ENCODE measurements at regions of chr14 and their contacts with region 1.

Region 1: DNA sequence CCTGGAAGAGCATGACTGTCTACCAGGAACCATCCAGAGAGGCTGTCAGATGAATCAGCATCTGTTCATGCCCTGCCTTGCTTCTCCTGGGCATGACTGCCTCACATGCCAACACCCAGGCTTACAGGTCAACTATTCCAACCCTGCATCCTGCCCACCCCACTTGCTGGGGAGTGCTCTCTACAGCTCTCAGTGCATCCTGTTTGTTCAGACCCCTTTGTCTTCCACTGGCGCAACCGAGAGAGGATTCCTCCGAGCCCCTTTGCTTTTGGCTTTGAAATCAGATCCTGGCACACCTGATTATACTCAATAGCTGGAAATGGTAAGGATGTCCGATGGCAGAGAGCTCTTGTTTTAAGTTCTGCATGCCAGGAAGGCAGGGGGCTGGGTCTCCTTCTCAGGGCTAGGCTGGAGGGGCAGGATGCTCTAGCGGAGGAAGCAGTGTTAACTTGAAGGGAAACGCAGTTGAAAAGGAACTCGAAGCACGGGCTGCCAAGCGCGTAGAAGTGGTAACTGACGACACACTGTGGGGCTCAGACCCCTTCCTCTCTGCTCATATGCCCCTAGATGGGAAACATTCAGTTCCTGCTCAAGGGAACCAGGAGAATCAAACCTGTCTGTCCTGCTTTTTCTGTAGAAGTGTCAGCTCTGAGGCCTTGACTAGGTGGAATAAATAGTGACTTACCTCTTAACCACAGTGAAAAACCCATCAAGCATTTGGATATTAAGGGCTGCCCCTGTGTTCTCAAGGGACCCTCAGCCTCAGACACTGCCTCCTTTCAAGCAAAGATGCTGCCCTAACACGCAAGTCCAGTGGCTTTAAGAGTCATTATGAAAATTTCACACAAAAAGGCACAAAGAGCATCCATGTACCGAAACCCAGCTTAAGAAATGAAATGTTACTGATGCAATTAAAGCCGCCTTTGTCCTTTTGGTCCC is 297.5 kb downstream of the ZFP36L1 start:
- DNase-seq: no peak
- ATAC-seq: peak; percentile 92
- H3K4me3 Mint-ChIP-seq: peak overlapping the region; percentile 64
- H3K27ac Mint-ChIP-seq: peak overlapping the region; percentile 98
- H3K4me1 Mint-ChIP-seq: peaks cover 84% of the 10 kb centered on the region
- H3K27me3 Mint-ChIP-seq: no peaks in the 10 kb centered on the region
- CTCF ChIP-seq: no peak

Region 2: GRCh38 chr14:68471029-68471963 is 24.1 kb before region 1 on chr14:
- CTCF ChIA-PET with region 1: interaction called, 3 read pairs
- POLR2A ChIA-PET with region 1: interaction called, 92 read pairs
- intact Hi-C with region 1: loop called (anchors 1 kb)
- DNase-seq: peak; percentile 22
- ATAC-seq: peak; percentile 69
- H3K4me3 Mint-ChIP-seq: peak overlapping the region; percentile 38
- H3K27ac Mint-ChIP-seq: peak overlapping the region; percentile 96
- H3K4me1 Mint-ChIP-seq: peaks cover 85% of the 10 kb centered on the region
- H3K27me3 Mint-ChIP-seq: no peaks in the 10 kb centered on the region
- CTCF ChIP-seq: no peak

Region 3: GRCh38 chr14:68476212-68476907 is 19.0 kb before region 1 on chr14:
- CTCF ChIA-PET with region 1: interaction called, 3 read pairs
- POLR2A ChIA-PET with region 1: interaction called, 92 read pairs
- intact Hi-C with region 1: loop called (anchors 1 kb)
- DNase-seq: peak; percentile 40
- ATAC-seq: peak; percentile 83
- H3K4me3 Mint-ChIP-seq: peak overlapping the region; percentile 62
- H3K27ac Mint-ChIP-seq: peak overlapping the region; percentile 99
- H3K4me1 Mint-ChIP-seq: peaks cover 89% of the 10 kb centered on the region
- H3K27me3 Mint-ChIP-seq: no peaks in the 10 kb centered on the region
- CTCF ChIP-seq: no peak

Region 4: GRCh38 chr14:68513838-68514620 is 18.7 kb after region 1 on chr14:
- CTCF ChIA-PET with region 1: no interaction called
- POLR2A ChIA-PET with region 1: interaction called, 165 read pairs
- intact Hi-C with region 1: loop called (anchors 2 kb)
- DNase-seq: no peak
- ATAC-seq: peak; percentile 84
- H3K4me3 Mint-ChIP-seq: peak overlapping the region; percentile 64
- H3K27ac Mint-ChIP-seq: peak overlapping the region; percentile 94
- H3K4me1 Mint-ChIP-seq: peaks cover 66% of the 10 kb centered on the region
- H3K27me3 Mint-ChIP-seq: no peaks in the 10 kb centered on the region
- CTCF ChIP-seq: no peak

Region 5: GRCh38 chr14:68526420-68527105 is 31.2 kb after region 1 on chr14:
- CTCF ChIA-PET with region 1: interaction called, 3 read pairs
- POLR2A ChIA-PET with region 1: interaction called, 4 read pairs
- intact Hi-C with region 1: loop called (anchors 2 kb)
- DNase-seq: no peak
- ATAC-seq: no peak
- H3K4me3 Mint-ChIP-seq: no peak overlapping the region
- H3K27ac Mint-ChIP-seq: peak overlapping the region; percentile 61
- H3K4me1 Mint-ChIP-seq: peaks cover 50% of the 10 kb centered on the region
- H3K27me3 Mint-ChIP-seq: no peaks in the 10 kb centered on the region
- CTCF ChIP-seq: no peak

Region 6: DNA sequence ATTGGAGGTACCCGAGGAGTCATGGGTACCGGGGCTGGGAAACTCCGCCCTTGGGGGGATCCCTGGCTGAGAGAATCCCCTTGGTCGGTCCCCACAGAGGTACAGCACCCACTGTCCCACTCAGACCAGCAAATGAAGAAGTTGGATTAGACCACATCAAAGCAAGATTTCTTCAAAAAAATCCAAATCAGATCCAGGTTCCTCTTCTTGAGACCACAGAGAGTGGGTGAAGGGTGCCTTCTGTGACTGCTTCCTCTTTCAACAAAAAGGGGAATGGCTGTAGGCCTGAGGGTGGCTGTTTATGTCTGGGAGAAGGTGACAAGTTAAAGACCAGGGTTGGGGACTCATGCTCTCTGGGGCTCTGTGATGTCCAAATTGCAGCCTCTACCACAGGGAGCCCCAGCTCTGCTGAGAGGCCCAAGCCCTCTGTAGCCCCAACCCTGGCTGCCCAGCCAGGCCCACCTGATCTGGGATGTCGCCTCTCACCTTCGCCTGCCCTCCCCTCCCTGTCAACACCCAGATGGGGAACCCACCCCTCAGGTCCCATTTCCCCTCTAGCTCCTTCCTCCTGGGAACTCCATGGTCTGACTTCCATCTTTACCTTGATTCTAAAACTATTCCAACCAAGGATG is 246.6 kb after region 1 on chr14:
- CTCF ChIA-PET with region 1: no interaction called
- POLR2A ChIA-PET with region 1: interaction called, 4 read pairs
- intact Hi-C with region 1: loop called (anchors 5 kb)
- DNase-seq: peak; percentile 65
- ATAC-seq: peak; percentile 89
- H3K4me3 Mint-ChIP-seq: peak overlapping the region; percentile 32
- H3K27ac Mint-ChIP-seq: peak overlapping the region; percentile 86
- H3K4me1 Mint-ChIP-seq: peaks cover 54% of the 10 kb centered on the region
- H3K27me3 Mint-ChIP-seq: no peaks in the 10 kb centered on the region
- CTCF ChIP-seq: no peak